Mammary epithelial cell (primary cell): ENCODE measurements at regions of chr1 and their contacts with region 1.

Region 1: GRCh38 chr1:33228935-33229487 is 27.3 kb upstream of the ZNF362 start:
- DNase-seq: peak; percentile 66
- H3K4me3 ChIP-seq: no peak overlapping the region
- H3K27ac ChIP-seq: no peak overlapping the region
- H3K4me1 ChIP-seq: peaks cover 5% of the 10 kb centered on the region
- H3K27me3 ChIP-seq: no peaks in the 10 kb centered on the region
- CTCF ChIP-seq: no peak

Region 2: GRCh38 chr1:33137800-33138199 is 91.2 kb before region 1 on chr1:
- CTCF ChIA-PET with region 1: no interaction called
- dilution Hi-C with region 1: no loop called
- in situ Hi-C with region 1: no loop called
- intact Hi-C with region 1: no loop called
- DNase-seq: no peak
- H3K4me3 ChIP-seq: no peak overlapping the region
- H3K27ac ChIP-seq: no peak overlapping the region
- H3K4me1 ChIP-seq: no peaks in the 10 kb centered on the region
- H3K27me3 ChIP-seq: no peaks in the 10 kb centered on the region
- CTCF ChIP-seq: peak; percentile 37 to 52

Region 3: DNA sequence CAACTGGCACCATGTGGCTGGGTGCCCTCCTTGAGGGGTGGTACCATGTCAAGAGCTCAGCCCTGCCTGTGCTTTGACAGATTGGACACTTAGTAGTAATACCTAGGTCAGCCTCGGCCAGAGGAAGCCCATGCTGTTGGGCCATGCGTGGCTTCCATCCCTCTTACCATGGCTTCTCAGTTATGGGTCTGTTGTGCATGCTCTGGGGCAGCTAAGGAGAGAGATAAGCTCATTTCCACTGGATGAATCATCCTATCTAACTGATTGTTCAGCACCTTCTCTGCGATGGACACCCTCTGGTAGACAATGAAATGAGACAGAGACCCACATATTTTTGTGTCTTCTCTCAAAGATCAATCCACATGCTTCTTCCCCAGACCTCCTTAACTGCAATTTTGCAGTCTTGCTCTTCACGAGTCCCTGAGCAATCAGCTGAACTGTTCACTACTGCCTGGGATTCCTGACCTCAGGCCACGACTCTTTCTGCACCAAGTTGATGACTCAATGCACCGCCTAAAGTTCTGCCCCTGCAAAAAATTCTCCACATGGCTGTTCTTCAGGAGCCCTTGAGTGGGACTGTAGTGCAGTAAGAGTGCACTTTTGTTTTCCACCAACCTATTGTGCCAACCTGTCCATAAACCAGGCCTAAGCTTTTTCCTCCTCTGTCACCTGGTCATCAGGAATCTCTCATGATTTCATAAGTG is 40.3 kb before region 1 on chr1:
- CTCF ChIA-PET with region 1: no interaction called
- dilution Hi-C with region 1: loop called (anchors 5 kb)
- in situ Hi-C with region 1: no loop called
- intact Hi-C with region 1: no loop called
- DNase-seq: peak; percentile 43
- H3K4me3 ChIP-seq: no peak overlapping the region
- H3K27ac ChIP-seq: no peak overlapping the region
- H3K4me1 ChIP-seq: peaks cover 14% of the 10 kb centered on the region
- H3K27me3 ChIP-seq: no peaks in the 10 kb centered on the region
- CTCF ChIP-seq: no peak